Natural killer cell (primary cell): ENCODE measurements at regions of chr7 and their contacts with region 1.

Region 1: DNA sequence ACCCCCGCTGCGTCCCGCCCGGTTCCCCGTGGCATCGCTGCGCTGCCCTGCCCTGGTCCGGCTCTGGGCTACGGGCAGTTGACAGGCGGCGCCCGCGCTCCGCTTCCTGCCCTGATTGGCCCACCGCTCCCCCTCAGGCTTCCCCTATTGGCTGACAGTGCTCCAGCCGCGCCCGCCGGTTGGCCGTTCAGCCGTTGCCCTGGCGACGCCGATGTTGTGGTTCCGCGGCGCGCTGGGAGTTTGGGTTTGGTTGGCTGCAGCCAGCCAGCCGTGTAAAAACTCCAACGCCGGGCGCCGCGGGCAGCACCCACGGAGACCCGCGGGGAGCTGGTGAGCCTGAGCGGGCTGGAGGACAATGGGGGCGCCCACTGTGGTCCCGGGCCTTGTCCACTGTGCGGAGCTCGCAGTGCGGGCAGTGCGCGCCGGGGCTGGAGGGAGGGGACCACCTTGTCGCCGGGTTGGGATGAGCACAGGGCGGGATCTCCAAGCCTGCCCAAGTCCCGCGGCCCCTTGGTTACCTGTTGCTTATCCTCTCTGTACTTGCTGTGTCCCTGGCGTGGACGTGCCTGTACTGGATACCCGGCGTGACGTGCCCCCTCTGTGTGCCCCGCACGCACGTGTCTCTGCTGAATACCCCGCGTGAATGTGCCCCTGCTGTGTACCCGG is at the start of gene C7orf57:
- DNase-seq: peak; percentile 84 to 89
- ATAC-seq: peak; percentile 91 to 97 (median 95)
- H3K4me3 ChIP-seq: peak within 1 kb of the TSS; percentile 39
- H3K4me3 Mint-ChIP-seq: peak within 1 kb of the TSS; percentile 89
- H3K27ac ChIP-seq: no peak within 1 kb of the TSS
- H3K27ac Mint-ChIP-seq: peak within 1 kb of the TSS; percentile 62 to 83
- H3K4me1 ChIP-seq: peaks cover 13% of the 10 kb centered on the region
- H3K4me1 Mint-ChIP-seq: peaks cover 8 to 12% of the 10 kb centered on the region in 2 donors
- H3K27me3 ChIP-seq: peaks cover 7% of the 10 kb centered on the region
- H3K27me3 Mint-ChIP-seq: peaks cover 22 to 29% of the 10 kb centered on the region in 2 donors
- CTCF ChIP-seq: no peak
- total RNA-seq, gene C7orf57: 0.85 TPM in 1 of 3 donors, not detected in the others

Region 2: GRCh38 chr7:47991741-47992311 is 43.6 kb before region 1 on chr7:
- intact Hi-C with region 1: loop called (anchors 2 kb)
- DNase-seq: peak; percentile 77 to 89
- ATAC-seq: peak; percentile 98 to 99 (median 99)
- H3K4me3 ChIP-seq: peak overlapping the region; percentile 54
- H3K4me3 Mint-ChIP-seq: peak overlapping the region; percentile 98
- H3K27ac ChIP-seq: peak overlapping the region; percentile 72
- H3K27ac Mint-ChIP-seq: peak overlapping the region; percentile 95 to 97
- H3K4me1 ChIP-seq: peaks cover 13% of the 10 kb centered on the region
- H3K4me1 Mint-ChIP-seq: peaks cover 16 to 27% of the 10 kb centered on the region in 2 donors
- H3K27me3 ChIP-seq: no peaks in the 10 kb centered on the region
- H3K27me3 Mint-ChIP-seq: no peaks in the 10 kb centered on the region
- CTCF ChIP-seq: peak; percentile 69

Region 3: DNA sequence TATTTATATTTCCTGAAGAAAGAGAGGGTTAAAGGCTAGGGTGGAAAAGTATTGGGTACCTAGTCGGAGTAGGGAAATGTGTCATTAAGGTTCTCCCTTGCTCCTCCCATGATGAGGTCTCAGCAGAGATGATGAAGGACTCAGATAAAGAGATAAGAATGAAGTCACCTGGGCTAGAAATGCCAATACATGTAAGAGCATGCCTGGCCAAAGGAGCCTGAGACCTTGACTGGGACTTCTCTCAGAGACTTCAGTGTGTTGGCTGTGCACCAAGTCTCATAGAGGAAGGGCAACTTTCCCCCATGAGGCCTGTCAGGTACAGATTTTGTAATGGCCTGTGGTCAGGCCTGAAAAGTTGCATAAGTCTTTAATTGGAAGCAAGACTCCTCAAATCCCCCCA is 527.9 kb after region 1 on chr7:
- intact Hi-C with region 1: no loop called
- DNase-seq: no peak
- ATAC-seq: no peak
- H3K4me3 ChIP-seq: no peak overlapping the region
- H3K4me3 Mint-ChIP-seq: no peak overlapping the region
- H3K27ac ChIP-seq: no peak overlapping the region
- H3K27ac Mint-ChIP-seq: no peak overlapping the region
- H3K4me1 ChIP-seq: no peaks in the 10 kb centered on the region
- H3K4me1 Mint-ChIP-seq: no peaks in the 10 kb centered on the region
- H3K27me3 ChIP-seq: no peaks in the 10 kb centered on the region
- H3K27me3 Mint-ChIP-seq: no peaks in the 10 kb centered on the region
- CTCF ChIP-seq: no peak